Colonic mucosa (tissue), 4 donors: ENCODE measurements at regions of chr1 and their contacts with region 1.

Region 1: GRCh38 chr1:25616095-25616986 is at the start of gene MAN1C1:
- DNase-seq: peak; percentile 84
- H3K4me3 ChIP-seq: peak within 1 kb of the TSS; percentile 74
- H3K27ac ChIP-seq: peak within 1 kb of the TSS; percentile 57
- H3K4me1 ChIP-seq: peaks cover 10% of the 10 kb centered on the region
- H3K27me3 ChIP-seq: peaks cover 16% of the 10 kb centered on the region
- CTCF ChIP-seq: no peak
- total RNA-seq, gene MAN1C1: 2.7 to 4.3 TPM

Region 2: GRCh38 chr1:25538191-25538761 is 78.1 kb before region 1 on chr1:
- intact Hi-C with region 1: no loop called
- DNase-seq: no peak
- H3K4me3 ChIP-seq: no peak overlapping the region
- H3K27ac ChIP-seq: no peak overlapping the region
- H3K4me1 ChIP-seq: no peaks in the 10 kb centered on the region
- H3K27me3 ChIP-seq: no peaks in the 10 kb centered on the region
- CTCF ChIP-seq: no peak

Region 3: DNA sequence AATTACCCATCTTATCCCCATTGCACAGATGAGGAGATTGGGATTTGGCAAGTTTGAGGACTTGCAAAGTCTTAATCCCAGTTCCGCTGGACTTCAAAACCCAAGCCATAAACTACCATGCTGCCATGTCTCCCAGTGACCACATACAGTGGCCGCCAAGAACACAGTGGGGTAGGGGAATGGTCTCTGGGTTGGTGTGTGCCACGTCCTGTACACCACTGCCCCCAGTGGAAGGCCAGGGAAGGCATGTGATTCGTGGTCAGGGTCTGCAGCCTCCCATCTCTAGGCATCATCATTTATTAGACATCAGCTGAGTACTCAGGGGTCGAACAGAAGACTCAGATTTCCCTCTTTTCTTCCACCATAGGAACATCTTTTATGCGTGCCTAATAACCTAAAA is 76.2 kb after region 1 on chr1:
- intact Hi-C with region 1: loop called (anchors 5 kb)
- DNase-seq: no peak
- H3K4me3 ChIP-seq: no peak overlapping the region
- H3K27ac ChIP-seq: no peak overlapping the region
- H3K4me1 ChIP-seq: no peaks in the 10 kb centered on the region
- H3K27me3 ChIP-seq: no peaks in the 10 kb centered on the region
- CTCF ChIP-seq: peak; percentile 27